GM18951 (cell line): ENCODE measurements at regions of chr11 and their contacts with region 1.

Region 1: DNA sequence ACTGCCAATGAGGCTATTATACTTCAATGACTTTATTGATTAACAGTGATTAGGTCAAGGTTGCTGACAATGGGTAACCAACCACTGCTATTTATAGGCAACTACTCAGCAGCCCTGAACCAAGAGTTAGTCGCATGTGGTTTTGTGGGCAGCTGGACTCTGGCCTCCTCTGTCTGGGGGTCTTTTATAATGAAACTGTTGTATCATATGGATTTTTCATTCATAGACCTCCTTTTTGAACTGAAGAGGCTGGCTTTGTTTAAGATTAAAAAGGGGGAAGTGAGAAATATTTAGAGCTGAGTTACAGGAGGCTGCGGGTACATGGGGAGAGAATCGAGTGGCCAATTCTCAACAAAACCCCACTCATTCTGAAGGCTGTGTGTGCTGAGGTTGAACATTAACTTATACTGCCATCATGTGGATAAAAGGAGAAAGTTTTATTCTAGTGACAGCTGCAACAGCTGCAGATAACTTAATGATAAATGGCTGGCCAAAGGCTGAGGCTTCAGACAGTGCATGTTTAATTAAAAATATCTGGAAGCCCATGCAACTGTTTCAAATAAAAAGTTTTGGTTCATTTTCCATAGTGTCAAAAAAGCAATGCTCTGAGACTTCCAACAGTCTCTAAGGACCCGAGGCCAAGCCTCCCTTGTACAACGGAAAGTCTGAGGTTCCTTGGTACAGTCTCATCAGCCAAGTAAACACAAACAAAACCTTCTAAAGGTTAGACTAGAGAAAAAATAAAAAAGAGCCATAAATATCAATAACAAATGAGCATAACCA is 682.6 kb downstream of the KCNA4 start:
- POLR2A ChIP-seq: no peak

Region 2: DNA sequence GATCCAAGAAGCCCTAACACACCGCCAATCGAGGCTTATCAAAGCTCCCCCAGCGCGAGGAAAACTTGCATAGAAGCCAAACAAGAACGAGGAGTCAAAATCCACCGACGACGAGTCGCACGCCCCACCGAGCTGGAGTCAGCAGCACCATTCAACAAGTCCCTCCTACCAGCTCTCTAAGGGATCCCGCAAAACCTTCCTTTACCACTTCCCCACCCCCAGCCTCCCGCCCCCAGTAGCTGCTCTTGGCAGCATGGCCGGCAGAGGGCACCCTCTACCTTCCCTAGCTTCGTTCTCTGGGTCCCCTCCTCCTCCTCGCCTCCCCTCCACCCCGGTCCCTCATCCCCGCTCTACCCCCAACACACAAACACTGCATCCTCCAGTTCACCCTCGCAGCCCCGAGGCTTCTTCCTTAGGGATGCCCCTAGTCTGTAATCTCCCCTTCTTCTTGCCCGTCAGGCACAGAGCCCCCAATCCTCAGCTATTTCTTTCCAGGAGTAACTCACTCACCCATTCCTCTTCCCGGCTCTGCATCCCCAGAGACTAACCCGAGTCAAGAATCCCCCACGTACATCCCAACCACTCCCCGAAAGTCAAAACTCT is 1635.2 kb before region 1 on chr11:
- in situ Hi-C with region 1: loop called (anchors 10 kb)
- POLR2A ChIP-seq: no peak